SK-N-SH (cell line): ENCODE measurements at regions of chr13 and their contacts with region 1.

Region 1: GRCh38 chr13:101144808-101145419 is 271.4 kb downstream of the NALCN start:
- DNase-seq: peak; percentile 46
- H3K4me3 ChIP-seq: no peak overlapping the region; a peak in 1 of 4 replicates
- H3K27ac ChIP-seq: no peak overlapping the region
- H3K4me1 ChIP-seq: no peaks in the 10 kb centered on the region; a peak in 2 of 4 replicates
- H3K27me3 ChIP-seq: no peaks in the 10 kb centered on the region
- CTCF ChIP-seq: peak; percentile 80
- EP300 ChIP-seq: no peak
- RAD21 ChIP-seq: peak; percentile 91

Region 2: GRCh38 chr13:101013245-101013644 is 131.7 kb before region 1 on chr13:
- CTCF ChIA-PET with region 1: no interaction called
- POLR2A ChIA-PET with region 1: no interaction called
- DNase-seq: no peak
- H3K4me3 ChIP-seq: no peak overlapping the region
- H3K27ac ChIP-seq: no peak overlapping the region
- H3K4me1 ChIP-seq: no peaks in the 10 kb centered on the region; a peak in 1 of 4 replicates
- H3K27me3 ChIP-seq: no peaks in the 10 kb centered on the region
- CTCF ChIP-seq: no peak
- EP300 ChIP-seq: no peak
- RAD21 ChIP-seq: no peak

Region 3: GRCh38 chr13:101049166-101049850 is 95.6 kb before region 1 on chr13:
- CTCF ChIA-PET with region 1: no interaction called
- POLR2A ChIA-PET with region 1: no interaction called
- DNase-seq: no peak
- H3K4me3 ChIP-seq: no peak overlapping the region
- H3K27ac ChIP-seq: no peak overlapping the region
- H3K4me1 ChIP-seq: no peaks in the 10 kb centered on the region; a peak in 1 of 4 replicates
- H3K27me3 ChIP-seq: no peaks in the 10 kb centered on the region
- CTCF ChIP-seq: no peak
- EP300 ChIP-seq: no peak
- RAD21 ChIP-seq: no peak

Region 4: DNA sequence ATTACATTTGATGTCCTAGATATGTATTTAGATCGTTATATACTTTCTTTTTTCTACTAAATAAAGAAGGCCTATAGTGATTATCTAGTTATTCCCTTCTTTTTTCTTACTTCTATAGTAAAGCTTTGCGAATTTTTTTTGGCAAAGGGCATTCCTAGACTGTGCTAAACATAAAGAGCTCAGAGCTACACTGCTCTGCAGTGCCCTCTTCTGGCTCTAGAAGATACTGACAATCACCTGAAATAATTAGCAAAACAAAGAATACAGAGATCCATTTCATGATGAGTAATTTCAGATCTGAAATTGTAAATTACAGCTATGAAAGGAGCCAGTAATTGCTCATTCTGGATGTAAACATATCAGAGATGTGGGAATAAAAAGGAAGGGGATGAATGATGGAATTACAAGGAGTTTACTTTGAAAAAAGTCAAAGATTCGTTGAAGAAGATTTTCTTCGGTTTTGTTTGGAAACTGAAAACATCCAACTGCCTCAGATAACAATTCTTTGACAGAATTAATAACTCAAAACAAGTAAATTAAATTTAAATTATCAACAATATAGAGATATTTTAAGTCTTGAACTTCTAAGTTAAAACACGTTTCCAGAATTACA is 17.1 kb before region 1 on chr13:
- CTCF ChIA-PET with region 1: interaction called, 25 read pairs
- POLR2A ChIA-PET with region 1: no interaction called
- DNase-seq: peak; percentile 53
- H3K4me3 ChIP-seq: no peak overlapping the region; a peak in 1 of 4 replicates
- H3K27ac ChIP-seq: no peak overlapping the region
- H3K4me1 ChIP-seq: no peaks in the 10 kb centered on the region
- H3K27me3 ChIP-seq: no peaks in the 10 kb centered on the region
- CTCF ChIP-seq: peak; percentile 92
- EP300 ChIP-seq: no peak
- RAD21 ChIP-seq: peak; percentile 84

Region 5: GRCh38 chr13:101170306-101170705 is 25.4 kb after region 1 on chr13:
- CTCF ChIA-PET with region 1: interaction called, 12 read pairs
- POLR2A ChIA-PET with region 1: no interaction called
- DNase-seq: no peak
- H3K4me3 ChIP-seq: no peak overlapping the region
- H3K27ac ChIP-seq: no peak overlapping the region
- H3K4me1 ChIP-seq: no peaks in the 10 kb centered on the region; a peak in 1 of 4 replicates
- H3K27me3 ChIP-seq: no peaks in the 10 kb centered on the region
- CTCF ChIP-seq: no peak
- EP300 ChIP-seq: no peak
- RAD21 ChIP-seq: no peak

Region 6: DNA sequence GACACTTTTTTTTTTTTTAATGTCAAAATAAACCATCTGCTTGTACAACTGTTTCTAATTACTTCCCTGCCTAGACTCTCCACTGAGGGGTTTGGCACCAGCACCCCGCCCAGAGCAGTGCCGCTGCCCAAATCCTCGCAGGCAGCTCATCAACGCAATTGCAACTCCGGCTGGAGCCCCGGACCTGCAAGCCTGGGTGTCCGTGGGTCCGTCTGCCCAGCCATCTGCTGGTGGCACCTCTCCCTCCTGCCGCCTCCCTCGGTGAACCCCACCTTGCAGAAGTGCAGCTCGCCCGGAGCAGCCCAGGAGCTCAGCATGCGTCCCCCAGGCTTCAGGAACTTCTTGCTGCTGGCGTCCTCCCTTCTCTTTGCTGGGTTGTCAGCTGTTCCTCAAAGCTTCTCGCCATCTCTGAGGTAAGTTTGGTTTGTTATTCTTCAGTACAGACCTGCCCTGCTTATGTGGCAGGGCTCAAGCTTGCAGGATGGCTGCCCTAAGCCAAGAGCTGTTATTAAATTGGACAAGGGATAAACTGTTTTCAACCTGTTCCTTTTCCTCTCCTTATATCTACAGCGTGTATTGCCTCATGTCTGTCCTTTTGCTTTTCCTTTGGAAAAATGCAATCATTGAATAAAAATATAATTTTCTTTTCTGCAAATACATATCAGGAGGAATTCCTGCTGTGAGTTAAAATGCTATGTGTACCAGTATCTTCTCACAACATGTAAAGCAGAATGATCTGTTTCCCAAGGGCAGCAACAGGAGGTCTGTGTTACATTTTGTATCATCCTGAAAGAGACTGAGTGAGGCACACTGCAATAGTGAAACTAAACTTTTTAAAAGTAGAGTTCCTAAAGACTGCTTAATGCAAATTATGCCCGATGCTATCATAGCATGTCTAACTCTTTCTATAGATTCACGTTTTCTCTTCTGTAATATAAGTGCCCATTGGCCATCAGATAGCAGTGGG is 307.9 kb after region 1 on chr13 and contains the start of gene ITGBL1:
- CTCF ChIA-PET with region 1: interaction called, 14 read pairs
- POLR2A ChIA-PET with region 1: interaction called, 3 read pairs
- DNase-seq: peak; percentile 38
- H3K4me3 ChIP-seq: peak within 1 kb of the TSS; percentile 65 to 82
- H3K27ac ChIP-seq: peak within 1 kb of the TSS; percentile 81 to 90
- H3K4me1 ChIP-seq: peaks cover 11 to 38% of the 10 kb centered on the region in 2 experiments
- H3K27me3 ChIP-seq: no peaks in the 10 kb centered on the region
- CTCF ChIP-seq: no peak
- EP300 ChIP-seq: no peak
- RAD21 ChIP-seq: no peak
- polyA plus RNA-seq, gene ITGBL1: 78.7 and 90.0 TPM in 2 replicates

Region 7: DNA sequence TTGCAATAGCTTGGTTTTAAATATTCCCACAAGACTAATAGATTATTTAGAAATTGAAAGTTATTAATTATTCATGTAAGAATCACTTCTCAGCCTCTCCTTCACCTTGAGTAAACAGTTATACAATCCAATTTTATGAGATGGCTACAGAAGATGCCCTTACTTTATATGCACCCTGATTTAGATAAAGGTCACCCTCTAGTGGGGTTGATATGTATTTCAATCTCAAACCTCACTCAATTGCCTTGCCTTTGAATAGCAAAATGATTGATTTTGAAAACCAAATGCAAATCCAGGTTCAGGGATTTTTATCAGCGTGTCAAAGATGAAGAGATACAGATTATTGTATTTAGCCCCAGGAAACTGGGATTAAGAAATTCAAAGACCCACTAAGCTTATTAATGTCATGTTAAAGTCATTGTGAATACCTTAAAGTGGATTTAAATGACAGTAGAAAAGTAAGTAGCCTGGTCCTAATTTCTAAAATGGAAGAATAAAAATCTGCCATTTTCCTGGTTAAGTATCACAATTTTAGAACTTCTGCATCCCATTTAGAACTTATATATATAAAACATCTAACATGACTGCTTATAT is 612.6 kb after region 1 on chr13:
- CTCF ChIA-PET with region 1: interaction called, 34 read pairs
- POLR2A ChIA-PET with region 1: no interaction called
- DNase-seq: peak; percentile 48
- H3K4me3 ChIP-seq: no peak overlapping the region; a peak in 1 of 4 replicates
- H3K27ac ChIP-seq: no peak overlapping the region
- H3K4me1 ChIP-seq: peaks cover 0 to 13% of the 10 kb centered on the region in 2 experiments; a peak in 2 of 4 replicates
- H3K27me3 ChIP-seq: no peaks in the 10 kb centered on the region
- CTCF ChIP-seq: peak; percentile 76
- EP300 ChIP-seq: no peak
- RAD21 ChIP-seq: peak; percentile 84

Region 8: GRCh38 chr13:101942038-101942437 is 797.1 kb after region 1 on chr13:
- CTCF ChIA-PET with region 1: interaction called, 17 read pairs
- POLR2A ChIA-PET with region 1: no interaction called
- DNase-seq: peak; percentile 34
- H3K4me3 ChIP-seq: peak overlapping the region in 1 of 2 experiments; percentile 42; a peak in 1 of 4 replicates
- H3K27ac ChIP-seq: peak overlapping the region in 1 of 2 experiments; percentile 94; a peak in 2 of 4 replicates
- H3K4me1 ChIP-seq: peaks cover 0 to 21% of the 10 kb centered on the region in 2 experiments; a peak in 2 of 4 replicates
- H3K27me3 ChIP-seq: no peaks in the 10 kb centered on the region
- CTCF ChIP-seq: peak; percentile 84
- EP300 ChIP-seq: no peak
- RAD21 ChIP-seq: peak; percentile 96

Region 9: GRCh38 chr13:102571075-102571474 is 1426.2 kb after region 1 on chr13:
- CTCF ChIA-PET with region 1: interaction called, 20 read pairs
- POLR2A ChIA-PET with region 1: no interaction called
- DNase-seq: peak; percentile 37
- H3K4me3 ChIP-seq: no peak overlapping the region
- H3K27ac ChIP-seq: no peak overlapping the region
- H3K4me1 ChIP-seq: peaks cover 0 to 12% of the 10 kb centered on the region in 2 experiments; a peak in 2 of 4 replicates
- H3K27me3 ChIP-seq: 0 out of 2 replicates have a peak, but pooled peaks cover 5% of the 10 kb centered on the region
- CTCF ChIP-seq: no peak
- EP300 ChIP-seq: no peak
- RAD21 ChIP-seq: peak; percentile 73